ENCODE measurements at regions of chr12 and their contacts with region 1.

Region 1: GRCh38 chr12:24719293-24719721 is 229.6 kb downstream of the BCAT1 start:
- DNase-seq: no peak
- ATAC-seq: peak; percentile 94
- H3K4me3 Mint-ChIP-seq: peak overlapping the region; percentile 64
- H3K27ac Mint-ChIP-seq: peak overlapping the region; percentile 92
- H3K4me1 Mint-ChIP-seq: peaks cover 35% of the 10 kb centered on the region
- H3K27me3 Mint-ChIP-seq: no peaks in the 10 kb centered on the region
- CTCF ChIP-seq: no peak

Region 2: DNA sequence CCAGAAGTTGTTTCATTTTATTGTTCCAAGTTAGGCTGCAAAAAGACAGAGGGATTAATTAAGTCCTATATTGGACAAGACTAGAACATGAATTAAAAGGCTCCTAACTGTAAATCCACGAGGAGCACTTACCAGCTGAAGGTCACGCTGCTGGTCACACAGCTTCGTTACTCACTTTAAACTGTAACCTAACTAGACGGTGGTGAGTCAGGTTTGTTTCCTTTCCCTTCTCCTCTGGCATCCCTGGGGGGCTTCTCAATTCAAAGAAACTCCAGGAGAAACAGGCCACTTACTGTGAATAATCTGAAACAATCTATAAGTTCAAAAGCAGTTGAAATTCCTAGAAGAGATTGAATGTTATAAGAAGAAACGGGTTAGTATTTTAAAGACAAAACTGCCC is 101.8 kb before region 1 on chr12:
- CTCF ChIA-PET with region 1: no interaction called
- POLR2A ChIA-PET with region 1: no interaction called
- intact Hi-C with region 1: no loop called
- DNase-seq: no peak
- ATAC-seq: peak; percentile 25
- H3K4me3 Mint-ChIP-seq: no peak overlapping the region
- H3K27ac Mint-ChIP-seq: no peak overlapping the region
- H3K4me1 Mint-ChIP-seq: peaks cover 6% of the 10 kb centered on the region
- H3K27me3 Mint-ChIP-seq: no peaks in the 10 kb centered on the region
- CTCF ChIP-seq: no peak

Region 3: DNA sequence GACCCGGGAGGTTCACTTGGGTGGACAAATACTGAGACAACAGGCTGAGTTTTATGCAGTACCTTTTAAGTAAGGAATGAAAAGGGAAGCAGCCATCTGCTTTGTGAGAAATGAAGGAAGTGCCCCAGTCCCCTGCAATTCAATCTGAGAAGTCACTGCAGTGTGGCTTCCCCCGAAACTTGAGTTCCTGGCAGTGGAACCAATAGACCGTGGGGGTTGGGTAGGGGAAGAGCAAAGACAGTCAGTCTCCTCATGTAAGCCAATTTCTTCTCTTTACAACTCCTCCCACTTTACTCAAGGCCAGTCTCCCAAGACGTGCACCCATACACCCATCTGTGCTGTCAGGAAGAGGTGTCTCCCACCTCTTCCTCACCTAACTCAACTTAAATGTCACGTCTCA is 23.1 kb after region 1 on chr12:
- CTCF ChIA-PET with region 1: no interaction called
- POLR2A ChIA-PET with region 1: interaction called, 4 read pairs
- intact Hi-C with region 1: loop called (anchors 1 kb)
- DNase-seq: peak; percentile 29
- ATAC-seq: peak; percentile 87
- H3K4me3 Mint-ChIP-seq: peak overlapping the region; percentile 64
- H3K27ac Mint-ChIP-seq: peak overlapping the region; percentile 90
- H3K4me1 Mint-ChIP-seq: peaks cover 56% of the 10 kb centered on the region
- H3K27me3 Mint-ChIP-seq: no peaks in the 10 kb centered on the region
- CTCF ChIP-seq: no peak

Measured in activated B cell treated with CpG ODN at 0.5 μM for 24 hours (primary cell).